Activated CD4-positive, alpha-beta T cell treated with anti-CD3 and anti-CD28 coated beads for 36 hours (primary cell): ENCODE measurements at regions of chr2 and their contacts with region 1.

Region 1: GRCh38 chr2:241315093-241315878 is at the start of gene HDLBP:
- DNase-seq: peak; percentile 100
- ATAC-seq: peak; percentile 84
- H3K4me3 Mint-ChIP-seq: peak within 1 kb of the TSS; percentile 100
- H3K27ac Mint-ChIP-seq: peak within 1 kb of the TSS; percentile 100
- H3K4me1 Mint-ChIP-seq: peaks cover 70% of the 10 kb centered on the region
- H3K27me3 Mint-ChIP-seq: no peaks in the 10 kb centered on the region
- total RNA-seq, gene HDLBP: 259 to 348 TPM

Region 2: GRCh38 chr2:240021488-240022104 is 1293.7 kb before region 1 on chr2:
- CTCF ChIA-PET with region 1: no interaction called
- POLR2A ChIA-PET with region 1: no interaction called
- intact Hi-C with region 1: loop called in 1 of 2 experiments (anchors 10 kb)
- DNase-seq: peak; percentile 83
- ATAC-seq: peak; percentile 28
- H3K4me3 Mint-ChIP-seq: no peak overlapping the region
- H3K27ac Mint-ChIP-seq: no peak overlapping the region
- H3K4me1 Mint-ChIP-seq: peaks cover 25% of the 10 kb centered on the region
- H3K27me3 Mint-ChIP-seq: no peaks in the 10 kb centered on the region

Region 3: DNA sequence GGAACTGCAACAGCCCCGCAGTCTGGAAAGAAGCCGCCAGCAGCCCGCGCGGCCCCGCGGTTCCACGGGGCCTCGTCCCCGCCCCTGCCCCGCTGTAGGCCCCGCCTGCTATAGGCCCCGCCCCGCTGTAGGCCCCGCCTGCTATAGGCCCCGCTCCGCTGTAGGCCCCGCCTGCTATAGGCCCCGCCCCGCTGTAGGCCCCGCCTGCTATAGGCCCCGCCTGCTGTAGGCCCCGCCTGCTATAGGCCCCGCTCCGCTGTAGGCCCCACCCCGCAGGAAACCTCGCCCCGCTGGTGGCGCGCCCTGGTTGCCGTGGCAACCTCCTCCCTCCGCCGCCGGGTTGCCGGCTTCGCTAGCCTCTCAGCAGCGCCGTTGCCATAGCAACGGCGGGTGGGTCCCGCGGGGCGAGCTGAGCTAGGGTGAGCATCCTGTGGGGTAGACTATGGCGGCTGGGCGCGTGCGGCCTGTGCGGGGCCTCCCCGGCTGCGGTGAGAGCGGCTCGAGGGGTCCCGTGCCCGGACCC is 483.0 kb before region 1 on chr2:
- CTCF ChIA-PET with region 1: no interaction called
- POLR2A ChIA-PET with region 1: no interaction called
- intact Hi-C with region 1: loop called in 1 of 2 experiments (anchors 1 kb)
- DNase-seq: peak; percentile 98
- ATAC-seq: peak; percentile 96
- H3K4me3 Mint-ChIP-seq: peak overlapping the region; percentile 63
- H3K27ac Mint-ChIP-seq: no peak overlapping the region
- H3K4me1 Mint-ChIP-seq: peaks cover 2% of the 10 kb centered on the region
- H3K27me3 Mint-ChIP-seq: peaks cover 19% of the 10 kb centered on the region

Region 4: DNA sequence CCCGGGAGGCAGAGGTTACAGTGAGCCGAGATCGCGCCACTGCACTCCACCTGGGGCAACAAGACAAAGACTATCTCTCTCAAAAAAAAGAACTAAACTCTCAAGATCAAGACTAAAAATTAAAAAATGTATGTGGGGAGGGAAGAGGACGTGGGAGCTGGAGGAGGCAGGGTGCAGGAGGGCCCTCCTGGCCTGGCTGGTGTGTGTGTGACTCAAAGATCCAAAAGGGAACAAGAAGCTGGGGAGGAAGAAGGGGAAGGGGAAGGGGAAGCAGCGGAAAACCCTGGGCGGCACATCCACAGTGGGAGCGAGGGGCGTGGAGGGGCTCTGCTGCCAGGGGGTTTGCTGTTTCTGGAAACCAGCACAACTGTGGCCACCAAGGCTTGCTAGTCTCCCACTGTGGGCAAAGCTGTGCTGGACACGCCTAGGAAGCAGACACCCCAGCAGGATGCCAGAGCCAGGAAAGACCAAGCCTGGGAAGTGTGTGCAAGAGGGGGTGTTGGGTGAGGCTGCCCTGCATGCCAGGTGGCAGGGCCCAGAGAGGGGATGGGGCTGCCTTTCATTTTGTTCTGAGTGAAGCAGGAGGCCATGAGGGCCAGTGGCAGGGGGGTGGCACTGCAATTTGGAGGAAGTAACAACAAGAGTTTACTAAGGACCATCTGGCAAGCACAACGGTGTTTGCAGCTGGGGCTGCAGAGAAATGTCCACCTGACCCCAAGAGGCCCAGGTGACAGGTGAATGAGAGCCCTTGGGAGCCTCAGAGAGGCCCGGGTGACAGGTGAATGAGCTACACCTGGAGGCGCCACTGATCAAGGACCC is 82.3 kb before region 1 on chr2:
- CTCF ChIA-PET with region 1: no interaction called
- POLR2A ChIA-PET with region 1: no interaction called
- intact Hi-C with region 1: no loop called
- DNase-seq: no peak
- ATAC-seq: no peak
- H3K4me3 Mint-ChIP-seq: no peak overlapping the region
- H3K27ac Mint-ChIP-seq: no peak overlapping the region
- H3K4me1 Mint-ChIP-seq: no peaks in the 10 kb centered on the region
- H3K27me3 Mint-ChIP-seq: no peaks in the 10 kb centered on the region

Region 5: DNA sequence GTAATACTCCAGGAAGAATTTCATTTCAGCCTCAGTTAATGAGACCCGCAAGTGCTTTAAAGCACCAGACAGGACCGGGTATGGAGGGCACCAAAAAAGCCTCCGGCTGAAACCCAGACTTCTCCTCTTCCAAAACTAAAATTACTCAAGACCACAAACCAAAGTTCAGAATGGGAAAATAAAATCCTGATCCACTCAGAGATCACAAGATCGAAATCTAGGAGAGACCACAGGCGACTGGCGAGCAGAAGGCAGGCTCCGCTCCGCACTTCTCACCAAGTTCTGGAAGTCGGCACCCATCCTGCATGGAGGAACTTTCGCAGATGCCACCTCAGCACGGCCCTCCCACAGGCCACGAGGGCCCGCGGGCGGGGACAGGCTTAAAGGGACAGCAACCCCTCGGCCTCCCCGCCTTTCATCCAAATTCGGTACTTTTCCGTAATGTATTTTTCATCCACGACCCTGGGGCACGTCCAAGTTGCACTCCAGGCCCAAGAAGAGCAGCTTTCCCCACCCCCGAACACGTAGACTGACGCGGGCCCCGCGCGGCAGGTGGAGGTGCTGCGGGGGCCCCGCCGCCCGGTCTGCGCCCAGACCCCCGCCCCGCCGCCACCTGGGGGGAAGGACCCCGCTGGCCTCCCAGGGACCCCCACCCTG is 43.5 kb before region 1 on chr2:
- CTCF ChIA-PET with region 1: no interaction called
- POLR2A ChIA-PET with region 1: no interaction called
- intact Hi-C with region 1: loop called (anchors 1 to 5 kb)
- DNase-seq: peak; percentile 72
- ATAC-seq: peak; percentile 59
- H3K4me3 Mint-ChIP-seq: peak overlapping the region; percentile 77
- H3K27ac Mint-ChIP-seq: peak overlapping the region; percentile 89
- H3K4me1 Mint-ChIP-seq: peaks cover 46% of the 10 kb centered on the region
- H3K27me3 Mint-ChIP-seq: no peaks in the 10 kb centered on the region

Region 6: GRCh38 chr2:241508240-241509154 is 193.2 kb after region 1 on chr2 and contains the start of gene STK25:
- CTCF ChIA-PET with region 1: no interaction called
- POLR2A ChIA-PET with region 1: no interaction called
- intact Hi-C with region 1: loop called (anchors 1 to 5 kb)
- DNase-seq: peak; percentile 99
- ATAC-seq: peak; percentile 96
- H3K4me3 Mint-ChIP-seq: peak within 1 kb of the TSS; percentile 79
- H3K27ac Mint-ChIP-seq: peak within 1 kb of the TSS; percentile 58
- H3K4me1 Mint-ChIP-seq: peaks cover 19% of the 10 kb centered on the region
- H3K27me3 Mint-ChIP-seq: peaks cover 3% of the 10 kb centered on the region
- total RNA-seq, gene STK25: 93.5 to 123 TPM

Region 7: DNA sequence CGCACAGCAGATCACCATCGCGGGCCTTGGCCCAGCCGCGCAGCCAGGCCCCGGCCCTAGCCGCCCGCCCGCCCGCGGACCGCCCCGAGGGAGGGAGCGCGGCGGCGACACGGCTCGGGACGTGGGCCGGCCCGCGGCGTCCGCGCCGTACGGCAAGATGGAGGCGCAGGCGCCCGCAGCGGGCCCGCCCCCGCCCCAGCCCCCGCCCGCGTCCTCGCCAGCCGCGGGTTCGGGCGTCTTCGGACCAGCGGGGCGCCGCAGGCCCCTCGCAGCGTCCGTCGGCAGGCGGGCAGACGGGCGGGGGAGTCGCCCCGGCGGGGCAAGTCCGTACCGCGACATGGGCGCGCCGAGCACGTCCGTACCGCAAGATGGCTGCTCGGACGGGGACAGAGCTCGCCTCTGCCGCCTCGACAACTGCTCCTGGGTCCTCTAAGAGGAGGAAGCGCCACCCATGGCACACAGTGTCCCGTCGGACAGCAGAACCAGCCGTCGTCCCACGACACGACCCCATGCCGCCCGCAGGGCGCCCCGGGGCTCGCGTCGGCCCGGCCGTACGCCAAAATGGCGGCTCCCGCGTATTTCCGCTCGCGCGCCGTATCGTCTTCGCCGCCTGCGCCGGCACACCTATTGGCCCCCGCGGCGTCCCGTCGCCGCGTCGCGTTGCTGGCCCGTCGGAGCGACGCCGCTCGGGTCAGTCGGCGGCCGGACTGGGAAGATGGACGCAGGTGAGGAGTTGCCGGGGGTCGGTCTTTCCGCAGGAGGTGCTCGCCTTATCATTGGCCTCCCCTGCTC is 321.9 kb after region 1 on chr2 and contains the starts of genes ATG4B and THAP4:
- CTCF ChIA-PET with region 1: no interaction called
- POLR2A ChIA-PET with region 1: interaction called, 4 read pairs
- intact Hi-C with region 1: loop called in 1 of 2 experiments (anchors 1 kb)
- DNase-seq: peak; percentile 90
- ATAC-seq: peak; percentile 69
- H3K4me3 Mint-ChIP-seq: peak within 1 kb of the TSS; percentile 84
- H3K27ac Mint-ChIP-seq: peak within 1 kb of the TSS; percentile 96
- H3K4me1 Mint-ChIP-seq: peaks cover 50% of the 10 kb centered on the region
- H3K27me3 Mint-ChIP-seq: no peaks in the 10 kb centered on the region
- total RNA-seq, gene ATG4B: 71.8 to 80.1 TPM
- total RNA-seq, gene THAP4: 42.5 to 54.1 TPM

Region 8: GRCh38 chr2:241877989-241878970 is 563.0 kb after region 1 on chr2:
- CTCF ChIA-PET with region 1: no interaction called
- POLR2A ChIA-PET with region 1: no interaction called
- intact Hi-C with region 1: loop called in 1 of 2 experiments (anchors 1 kb)
- DNase-seq: peak; percentile 88
- ATAC-seq: peak; percentile 21
- H3K4me3 Mint-ChIP-seq: no peak overlapping the region
- H3K27ac Mint-ChIP-seq: no peak overlapping the region
- H3K4me1 Mint-ChIP-seq: peaks cover 26% of the 10 kb centered on the region
- H3K27me3 Mint-ChIP-seq: no peaks in the 10 kb centered on the region